ENCODE measurements at regions of chr6 and their contacts with region 1.

Region 1: GRCh38 chr6:10722820-10723566 is at the start of gene TMEM14C:
- DNase-seq: peak; percentile 78
- ATAC-seq: peak; percentile 98
- H3K4me3 Mint-ChIP-seq: peak within 1 kb of the TSS; percentile 93
- H3K27ac Mint-ChIP-seq: peak within 1 kb of the TSS; percentile 89
- H3K4me1 Mint-ChIP-seq: peaks cover 39% of the 10 kb centered on the region
- H3K27me3 Mint-ChIP-seq: no peaks in the 10 kb centered on the region
- CTCF ChIP-seq: no peak
- total RNA-seq, gene TMEM14C: 23.0 and 23.1 TPM in 2 replicates

Region 2: DNA sequence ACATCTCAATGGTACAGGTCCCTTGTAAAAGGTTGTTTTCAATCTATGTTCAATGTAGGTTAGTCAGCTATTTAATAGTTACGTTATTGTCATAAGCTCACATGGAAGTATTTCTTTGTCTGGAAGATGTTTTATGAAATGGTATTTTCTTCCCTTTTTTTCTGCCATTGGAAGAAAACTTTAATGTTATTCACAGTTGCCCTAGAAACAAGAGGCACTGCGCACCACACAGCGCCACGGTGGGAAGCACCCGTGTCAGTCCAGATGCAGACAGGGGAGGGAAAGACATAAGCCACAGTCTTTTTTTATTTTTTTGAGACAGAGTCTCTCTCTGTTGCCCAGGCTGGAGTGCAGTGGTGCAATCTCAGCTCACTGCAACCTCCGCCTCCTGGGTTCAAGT is 119.8 kb before region 1 on chr6:
- CTCF ChIA-PET with region 1: no interaction called
- POLR2A ChIA-PET with region 1: interaction called, 10 read pairs
- intact Hi-C with region 1: no loop called
- DNase-seq: no peak
- ATAC-seq: no peak
- H3K4me3 Mint-ChIP-seq: no peak overlapping the region
- H3K27ac Mint-ChIP-seq: no peak overlapping the region
- H3K4me1 Mint-ChIP-seq: peaks cover 17% of the 10 kb centered on the region
- H3K27me3 Mint-ChIP-seq: no peaks in the 10 kb centered on the region
- CTCF ChIP-seq: no peak

Region 3: DNA sequence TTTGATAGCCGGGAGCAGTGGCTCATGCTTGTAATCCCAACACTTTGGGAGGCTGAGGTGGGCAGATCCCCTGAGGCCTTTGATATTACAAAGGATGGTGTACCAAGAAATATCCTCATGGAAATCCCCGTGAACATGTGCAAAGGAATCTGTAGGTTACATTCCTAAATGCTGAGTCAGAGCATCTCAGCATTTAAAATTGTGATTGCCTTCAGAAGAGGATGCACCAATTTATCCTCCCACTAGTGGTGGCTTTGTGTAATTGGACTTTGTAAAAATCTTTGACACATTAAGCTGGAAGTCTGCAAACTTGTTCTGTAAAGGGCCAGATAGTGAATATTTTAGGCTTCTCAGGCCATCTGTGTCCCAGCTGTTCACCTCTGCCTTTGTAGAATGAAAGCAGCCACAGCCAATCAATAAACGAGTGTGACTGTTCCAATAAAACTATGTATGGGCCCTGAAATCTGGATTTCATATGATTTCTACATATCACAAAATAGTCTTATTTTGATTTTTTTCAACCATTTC is 36.4 kb after region 1 on chr6:
- CTCF ChIA-PET with region 1: interaction called, 3 read pairs
- POLR2A ChIA-PET with region 1: interaction called, 20 read pairs
- intact Hi-C with region 1: no loop called
- DNase-seq: no peak
- ATAC-seq: peak; percentile 54
- H3K4me3 Mint-ChIP-seq: no peak overlapping the region
- H3K27ac Mint-ChIP-seq: no peak overlapping the region
- H3K4me1 Mint-ChIP-seq: peaks cover 5% of the 10 kb centered on the region
- H3K27me3 Mint-ChIP-seq: no peaks in the 10 kb centered on the region
- CTCF ChIP-seq: no peak